BJ (cell line): ENCODE measurements at regions of chr1 and their contacts with region 1.

Region 1: GRCh38 chr1:163535807-163536206 is 214.1 kb downstream of the NUF2 start:
- DNase-seq: no peak
- H3K4me3 ChIP-seq: no peak overlapping the region
- H3K27me3 ChIP-seq: no peaks in the 10 kb centered on the region
- CTCF ChIP-seq: peak; percentile 46

Region 2: DNA sequence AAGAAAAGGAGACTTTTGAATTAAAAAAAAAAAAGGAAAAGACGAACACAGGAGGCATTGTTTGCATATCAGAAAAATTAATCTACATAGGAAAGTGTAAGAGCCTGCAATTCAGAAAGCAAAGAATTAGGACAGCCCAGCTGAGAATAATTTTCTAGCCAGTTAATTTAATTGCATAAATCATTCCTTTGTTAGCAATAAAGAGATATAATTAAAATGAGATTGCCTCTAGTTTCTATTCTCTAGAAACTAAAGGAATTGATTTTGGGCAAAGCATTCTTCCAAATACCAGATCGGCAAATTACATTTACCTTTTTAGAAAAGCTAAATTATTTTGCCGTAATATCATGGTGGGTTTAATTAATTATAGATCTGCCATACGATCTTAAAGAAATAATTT is 168.1 kb before region 1 on chr1:
- CTCF ChIA-PET with region 1: no interaction called
- POLR2A ChIA-PET with region 1: no interaction called
- DNase-seq: no peak
- H3K4me3 ChIP-seq: no peak overlapping the region
- H3K27me3 ChIP-seq: no peaks in the 10 kb centered on the region; the same call in 1 of the 2 replicates
- CTCF ChIP-seq: no peak

Region 3: DNA sequence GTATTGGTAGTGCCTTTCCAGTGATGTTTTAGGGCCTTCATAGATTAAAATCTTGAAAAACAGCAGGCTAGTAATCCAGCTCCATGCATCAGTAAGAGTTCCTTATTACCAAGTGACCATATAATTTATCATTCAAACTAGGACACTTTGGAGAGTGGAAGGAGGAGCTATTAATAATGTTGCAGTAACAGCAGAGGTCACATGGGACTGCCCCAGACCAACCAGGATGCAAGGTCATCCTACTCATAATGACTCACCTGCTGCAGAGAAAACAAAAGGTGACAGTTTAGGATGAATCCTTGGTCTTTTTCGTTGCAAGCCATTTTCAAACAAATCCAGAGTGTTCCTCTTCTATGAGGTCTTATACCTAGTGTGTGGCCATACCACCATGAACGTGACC is 26.7 kb before region 1 on chr1:
- CTCF ChIA-PET with region 1: no interaction called
- POLR2A ChIA-PET with region 1: no interaction called
- DNase-seq: no peak
- H3K4me3 ChIP-seq: no peak overlapping the region
- H3K27me3 ChIP-seq: no peaks in the 10 kb centered on the region
- CTCF ChIP-seq: no peak

Region 4: DNA sequence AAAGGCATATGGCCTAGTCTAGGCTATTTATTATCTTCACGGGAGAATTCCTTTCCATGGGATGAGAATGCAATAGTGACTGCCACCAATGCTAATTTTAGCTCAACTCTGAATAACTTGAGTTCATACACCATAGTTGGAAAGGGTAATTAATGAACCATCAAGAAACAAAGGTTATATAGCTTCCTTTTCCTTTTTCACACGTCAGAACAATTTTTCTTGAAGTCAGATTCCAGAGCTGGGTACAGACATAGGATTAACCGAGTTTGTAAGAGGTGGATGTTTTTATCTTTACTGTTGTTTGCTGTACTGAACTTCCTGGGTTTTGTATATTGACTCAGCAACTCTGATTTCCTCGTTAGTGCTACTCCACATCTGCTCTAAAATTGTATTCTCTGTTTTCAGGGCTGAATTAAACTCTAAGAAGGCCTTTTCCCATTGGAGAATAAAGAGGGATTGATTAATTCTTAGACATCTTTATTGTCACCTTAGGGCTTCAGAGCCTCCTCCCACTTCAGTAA is 47.9 kb after region 1 on chr1:
- CTCF ChIA-PET with region 1: no interaction called
- POLR2A ChIA-PET with region 1: no interaction called
- DNase-seq: no peak
- H3K4me3 ChIP-seq: no peak overlapping the region
- H3K27me3 ChIP-seq: no peaks in the 10 kb centered on the region
- CTCF ChIP-seq: no peak

Region 5: DNA sequence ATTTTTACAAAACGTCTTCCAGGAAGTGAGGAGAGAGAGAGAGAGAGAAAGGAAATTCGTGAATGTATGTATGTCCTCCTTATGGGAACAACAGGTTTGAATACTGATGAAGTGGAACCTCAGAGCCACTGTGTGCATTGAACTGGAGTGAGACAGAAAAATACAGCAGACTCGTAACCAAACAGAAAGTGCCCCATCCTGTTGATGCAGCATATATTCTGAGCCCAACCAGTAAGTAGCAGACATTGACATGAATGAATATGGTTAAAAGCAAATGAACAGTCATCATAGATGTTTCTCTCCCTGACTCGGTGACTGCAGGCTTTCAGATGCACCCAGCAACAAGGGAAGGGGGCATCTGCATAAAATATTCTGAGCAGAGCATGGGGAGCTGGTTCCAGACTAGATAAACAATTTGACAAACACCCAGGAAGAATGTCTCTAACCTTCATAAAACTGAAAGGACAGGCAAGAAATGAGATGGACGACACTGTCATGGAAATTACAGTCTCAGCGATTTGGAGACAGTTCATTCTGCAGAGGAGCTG is 552.2 kb after region 1 on chr1:
- CTCF ChIA-PET with region 1: interaction called, 10 read pairs
- POLR2A ChIA-PET with region 1: no interaction called
- DNase-seq: no peak
- H3K4me3 ChIP-seq: no peak overlapping the region
- H3K27me3 ChIP-seq: no peaks in the 10 kb centered on the region
- CTCF ChIP-seq: no peak